ENCODE measurements at regions of chr1 and their contacts with region 1.

Region 1: GRCh38 chr1:224377676-224378006 is 21.0 kb downstream of the CNIH4 start:
- DNase-seq: no peak
- H3K4me3 Mint-ChIP-seq: peak overlapping the region; percentile 41
- H3K27ac Mint-ChIP-seq: peak overlapping the region; percentile 87
- H3K4me1 Mint-ChIP-seq: peaks cover 90% of the 10 kb centered on the region
- H3K27me3 Mint-ChIP-seq: no peaks in the 10 kb centered on the region

Region 2: DNA sequence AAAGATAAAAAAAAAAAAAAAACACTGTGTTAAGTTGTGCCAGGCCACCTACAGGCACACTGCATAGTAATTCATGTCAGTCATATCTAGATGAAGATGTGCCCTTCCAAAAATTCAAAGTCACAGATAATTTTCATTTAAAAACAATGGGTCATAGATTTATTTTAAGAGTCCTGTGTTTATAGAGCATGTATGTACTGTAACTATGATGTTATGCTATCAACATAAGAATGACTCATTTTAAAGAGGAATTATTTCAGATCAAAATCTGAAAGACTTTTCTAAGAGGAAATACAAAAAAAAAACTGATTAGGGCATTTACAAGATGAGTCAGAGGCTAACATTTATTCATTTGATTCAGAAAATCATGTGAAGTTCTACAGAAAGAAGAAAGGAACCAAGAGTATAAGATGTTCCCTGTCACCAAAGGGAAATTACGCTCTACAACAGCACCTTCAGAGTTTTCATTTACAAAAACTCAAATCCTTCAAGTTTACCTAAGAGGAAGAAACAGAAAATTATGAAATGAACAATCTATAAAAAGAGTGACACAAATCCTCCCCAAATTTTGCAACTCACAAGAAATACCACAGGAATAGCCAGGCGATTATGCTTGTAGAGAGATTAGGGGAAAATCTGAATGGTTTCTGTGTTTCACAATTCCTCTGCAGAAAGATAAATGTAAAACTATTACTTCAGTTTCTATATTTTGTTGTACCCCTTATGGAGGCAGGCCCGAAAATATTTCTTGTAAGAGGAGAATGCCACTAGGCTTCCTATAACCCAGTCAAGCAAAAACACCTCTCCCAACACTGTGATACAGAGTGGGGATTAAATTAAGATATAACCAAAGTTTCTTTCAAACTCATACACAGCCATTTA is 545.6 kb before region 1 on chr1:
- intact Hi-C with region 1: loop called (anchors 5 kb)
- DNase-seq: no peak
- H3K4me3 Mint-ChIP-seq: peak overlapping the region; percentile 54
- H3K27ac Mint-ChIP-seq: peak overlapping the region; percentile 92
- H3K4me1 Mint-ChIP-seq: peaks cover 24% of the 10 kb centered on the region
- H3K27me3 Mint-ChIP-seq: no peaks in the 10 kb centered on the region

Region 3: GRCh38 chr1:224168859-224169380 is 208.7 kb before region 1 on chr1:
- intact Hi-C with region 1: loop called (anchors 1 kb)
- DNase-seq: peak; percentile 37
- H3K4me3 Mint-ChIP-seq: peak overlapping the region; percentile 50
- H3K27ac Mint-ChIP-seq: peak overlapping the region; percentile 83
- H3K4me1 Mint-ChIP-seq: peaks cover 36% of the 10 kb centered on the region
- H3K27me3 Mint-ChIP-seq: peaks cover 7% of the 10 kb centered on the region

Region 4: DNA sequence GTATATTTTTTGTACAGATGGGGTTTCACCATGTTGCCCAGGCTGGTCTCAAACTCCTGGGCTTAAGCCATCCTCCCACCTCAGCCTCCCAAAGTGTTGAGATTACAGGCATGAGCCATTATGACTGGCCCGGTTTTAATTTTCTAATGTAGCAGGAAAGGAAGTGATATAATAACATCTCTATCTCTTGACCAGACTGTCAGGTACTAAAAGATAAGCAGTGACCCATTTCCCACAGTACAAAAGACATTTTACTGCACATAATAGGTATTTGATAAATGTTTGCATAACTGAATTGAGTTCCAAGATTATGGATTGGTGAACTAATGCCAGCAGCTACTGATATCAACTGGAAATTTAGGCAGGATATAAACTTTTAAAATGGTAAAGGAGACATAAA is 51.7 kb before region 1 on chr1:
- intact Hi-C with region 1: no loop called
- DNase-seq: no peak
- H3K4me3 Mint-ChIP-seq: no peak overlapping the region
- H3K27ac Mint-ChIP-seq: no peak overlapping the region
- H3K4me1 Mint-ChIP-seq: peaks cover 38% of the 10 kb centered on the region
- H3K27me3 Mint-ChIP-seq: no peaks in the 10 kb centered on the region

Region 5: DNA sequence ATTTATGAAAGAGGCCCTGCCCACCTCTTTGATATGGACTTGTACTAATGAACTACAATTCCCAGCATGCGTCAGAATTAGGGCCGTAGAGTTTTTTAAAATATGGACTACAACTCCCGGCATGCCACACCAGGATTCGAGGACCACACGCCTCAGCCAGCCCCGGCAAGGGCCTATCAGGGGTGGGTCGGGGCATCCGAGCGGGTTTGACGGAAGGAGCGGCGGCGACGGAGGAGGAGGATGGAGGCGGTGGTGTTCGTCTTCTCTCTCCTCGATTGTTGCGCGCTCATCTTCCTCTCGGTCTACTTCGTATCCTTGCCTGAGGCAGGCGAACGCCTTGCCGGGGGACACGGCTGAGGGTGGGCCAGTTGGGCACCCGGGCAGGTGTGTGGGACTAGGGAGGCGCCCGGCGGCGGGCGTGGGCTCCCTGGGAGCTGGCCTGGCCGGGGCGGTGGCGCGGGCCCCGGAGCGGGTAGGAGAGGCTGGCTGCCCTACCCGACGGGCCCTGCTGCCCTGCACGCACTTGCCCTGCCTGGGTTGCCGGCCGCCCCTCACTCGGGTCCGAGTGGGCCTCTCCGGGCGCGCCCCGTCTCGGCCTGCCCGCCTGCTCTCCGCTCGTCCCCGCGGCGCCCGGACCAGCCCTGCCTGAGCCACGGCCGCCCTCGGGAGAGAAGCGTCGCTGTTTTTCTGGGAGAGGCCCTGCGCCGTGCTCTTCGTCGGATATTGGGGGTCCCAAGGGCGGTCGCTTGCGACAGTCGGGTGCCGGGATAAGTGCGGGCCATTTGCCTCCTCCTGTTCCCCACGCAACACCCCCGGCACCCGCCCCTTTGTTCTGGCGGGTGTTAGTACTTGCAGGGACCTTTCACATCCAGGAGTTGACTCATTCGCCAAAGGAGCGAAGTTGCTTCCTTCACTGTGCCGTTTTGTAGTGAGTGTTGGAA is 20.7 kb before region 1 on chr1 and contains the start of gene CNIH4:
- intact Hi-C with region 1: loop called (anchors 1 kb)
- DNase-seq: peak; percentile 88
- H3K4me3 Mint-ChIP-seq: peak within 1 kb of the TSS; percentile 94
- H3K27ac Mint-ChIP-seq: peak within 1 kb of the TSS; percentile 89
- H3K4me1 Mint-ChIP-seq: peaks cover 32% of the 10 kb centered on the region
- H3K27me3 Mint-ChIP-seq: no peaks in the 10 kb centered on the region
- total RNA-seq, gene CNIH4: 60.2 and 60.7 TPM in 2 replicates

Region 6: DNA sequence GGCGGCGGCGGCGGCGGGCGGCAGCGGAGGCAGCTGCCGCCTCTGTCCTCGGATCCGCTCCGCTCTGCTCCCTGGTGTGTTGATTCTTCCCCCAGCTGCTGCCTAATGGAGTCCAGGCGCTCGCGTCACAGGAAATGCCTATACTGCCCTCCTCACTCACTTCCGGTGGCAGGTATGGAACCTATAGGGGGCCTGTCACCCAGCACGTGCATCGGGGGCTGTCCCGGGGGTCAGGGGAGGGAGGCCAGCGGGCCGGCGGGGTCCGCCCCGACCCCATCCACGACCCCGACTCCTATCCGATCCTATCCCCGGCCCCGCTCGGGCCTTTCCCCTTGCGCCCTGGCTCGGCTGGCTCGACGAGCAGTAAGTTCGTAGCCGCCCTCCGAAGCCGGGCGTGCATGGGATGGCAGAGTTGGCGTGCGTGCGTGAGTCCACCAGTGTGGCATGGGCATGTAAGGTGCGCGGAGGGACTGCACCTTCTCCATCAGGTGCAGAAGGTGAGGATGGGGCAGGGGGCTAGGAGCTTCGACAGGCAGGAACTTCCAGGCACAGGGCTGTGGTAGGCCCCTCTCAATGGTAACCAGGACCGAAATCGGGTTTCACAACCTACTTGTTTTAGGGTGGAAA is 57.2 kb after region 1 on chr1 and contains the start of gene WDR26:
- intact Hi-C with region 1: loop called (anchors 2 kb)
- DNase-seq: peak; percentile 83
- H3K4me3 Mint-ChIP-seq: peak within 1 kb of the TSS; percentile 90
- H3K27ac Mint-ChIP-seq: peak within 1 kb of the TSS; percentile 92
- H3K4me1 Mint-ChIP-seq: peaks cover 44% of the 10 kb centered on the region
- H3K27me3 Mint-ChIP-seq: no peaks in the 10 kb centered on the region
- total RNA-seq, gene WDR26: 80.5 and 82.0 TPM in 2 replicates

Region 7: DNA sequence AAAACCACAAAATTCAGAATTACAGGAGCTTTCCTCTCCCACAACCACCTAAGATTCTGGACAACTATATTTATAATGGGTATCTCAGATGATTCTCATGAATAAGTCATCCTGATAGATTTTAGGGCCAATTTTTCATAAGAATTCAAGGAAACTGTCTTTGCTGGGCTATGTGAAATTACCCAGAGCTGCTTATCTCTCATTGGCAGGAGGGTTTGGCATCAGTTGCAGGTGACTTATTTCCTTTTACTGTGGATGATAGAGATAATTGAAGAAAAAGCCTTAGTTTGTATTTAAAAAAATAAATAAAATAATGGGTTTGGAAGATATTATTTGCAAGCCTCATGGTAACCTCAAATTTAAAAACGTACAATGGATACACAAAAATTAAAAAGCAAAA is 95.2 kb after region 1 on chr1:
- intact Hi-C with region 1: no loop called
- DNase-seq: no peak
- H3K4me3 Mint-ChIP-seq: no peak overlapping the region
- H3K27ac Mint-ChIP-seq: no peak overlapping the region
- H3K4me1 Mint-ChIP-seq: no peaks in the 10 kb centered on the region
- H3K27me3 Mint-ChIP-seq: peaks cover 9% of the 10 kb centered on the region

Measured in activated T-helper 2 cell treated with anti-CD3 and anti-CD28 coated beads, Interferon-gamma antibody, Interleukin-2, Interleukin-4, amounts not matched to agents 10 μg/mL and 5 μg/mL and 100 μg/mL, durations not matched to agents 14 hours and 24 hours and 36 hours (primary cell).